WTC11 (cell line): ENCODE measurements at regions of chr2 and their contacts with region 1.

Region 1: GRCh38 chr2:71299507-71299906 is 32.1 kb upstream of the ZNF638 start:
- DNase-seq: no peak
- ATAC-seq: no peak; the same call in 1 of the 2 replicates
- H3K4me3 Mint-ChIP-seq: no peak overlapping the region
- H3K27ac Mint-ChIP-seq: no peak overlapping the region
- H3K4me1 Mint-ChIP-seq: no peaks in the 10 kb centered on the region
- H3K27me3 Mint-ChIP-seq: no peaks in the 10 kb centered on the region
- CTCF ChIP-seq: peak; percentile 60

Region 2: GRCh38 chr2:71226965-71227560 is 72.4 kb before region 1 on chr2 and contains the start of gene PAIP2B:
- CTCF ChIA-PET with region 1: interaction called, 14 read pairs
- POLR2A ChIA-PET with region 1: interaction called, 3 read pairs
- DNase-seq: peak; percentile 99
- ATAC-seq: peak; percentile 97
- H3K4me3 Mint-ChIP-seq: peak within 1 kb of the TSS; percentile 98
- H3K27ac Mint-ChIP-seq: peak within 1 kb of the TSS; percentile 96
- H3K4me1 Mint-ChIP-seq: peaks cover 12% of the 10 kb centered on the region
- H3K27me3 Mint-ChIP-seq: peaks cover 8% of the 10 kb centered on the region; the same call in 1 of the 2 replicates
- CTCF ChIP-seq: no peak
- total RNA-seq, gene PAIP2B: 19.3 to 22.4 TPM (median 22.2 TPM) in 3 replicates

Region 3: GRCh38 chr2:71250945-71251344 is 48.6 kb before region 1 on chr2:
- CTCF ChIA-PET with region 1: no interaction called
- POLR2A ChIA-PET with region 1: no interaction called
- DNase-seq: peak; percentile 18
- ATAC-seq: peak; percentile 47
- H3K4me3 Mint-ChIP-seq: no peak overlapping the region
- H3K27ac Mint-ChIP-seq: no peak overlapping the region
- H3K4me1 Mint-ChIP-seq: no peaks in the 10 kb centered on the region
- H3K27me3 Mint-ChIP-seq: peaks cover 34% of the 10 kb centered on the region
- CTCF ChIP-seq: no peak

Region 4: GRCh38 chr2:71276311-71277146 is 23.0 kb before region 1 on chr2:
- CTCF ChIA-PET with region 1: interaction called, 23 read pairs
- POLR2A ChIA-PET with region 1: no interaction called
- DNase-seq: peak; percentile 98
- ATAC-seq: peak; percentile 95
- H3K4me3 Mint-ChIP-seq: peak overlapping the region; percentile 80
- H3K27ac Mint-ChIP-seq: no peak overlapping the region
- H3K4me1 Mint-ChIP-seq: peaks cover 38% of the 10 kb centered on the region
- H3K27me3 Mint-ChIP-seq: peaks cover 55% of the 10 kb centered on the region
- CTCF ChIP-seq: no peak

Region 5: DNA sequence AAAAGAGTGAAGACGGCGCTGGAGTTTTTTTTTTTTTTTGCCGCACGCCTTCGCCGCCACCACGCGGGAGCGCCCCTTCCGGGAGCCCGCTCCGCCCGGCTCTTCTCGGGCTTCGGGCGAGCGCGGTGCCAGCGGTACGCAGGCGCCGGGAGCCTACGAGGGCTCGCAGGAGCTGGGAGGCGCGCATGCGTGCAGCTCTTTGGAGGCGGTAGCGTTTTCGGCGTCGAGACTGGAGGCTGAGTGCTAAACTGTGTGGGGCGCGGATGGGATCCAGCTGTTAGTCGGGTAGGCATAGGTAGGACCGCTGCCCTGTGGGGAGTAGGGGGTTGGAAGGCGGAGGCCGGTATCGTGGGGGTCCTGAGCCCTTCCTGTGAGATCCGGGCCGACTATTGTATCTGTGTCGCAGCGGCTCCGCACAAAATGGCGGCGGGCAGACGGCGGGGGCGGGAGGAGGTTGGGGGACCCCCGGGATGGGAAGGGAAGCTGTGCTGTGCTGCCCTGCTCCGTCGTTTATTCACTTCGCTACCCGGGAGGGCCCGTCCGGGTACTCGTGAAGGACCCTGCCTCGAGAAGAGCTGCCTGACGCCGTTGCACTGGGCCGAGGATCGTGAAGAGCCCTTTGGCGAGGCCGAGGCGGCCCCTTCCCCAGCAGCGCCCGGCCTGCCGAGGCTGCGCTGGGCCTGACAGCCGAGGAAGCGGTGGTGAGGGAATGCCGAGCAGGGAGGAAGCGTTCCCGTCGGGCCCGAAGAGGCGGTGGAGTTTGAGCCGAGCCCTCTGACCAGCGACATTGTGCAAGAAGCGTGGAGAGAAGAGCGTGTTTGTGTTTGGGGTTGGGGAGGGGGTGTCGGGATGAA is 32.3 kb after region 1 on chr2 and contains the start of gene ZNF638:
- CTCF ChIA-PET with region 1: interaction called, 77 read pairs
- POLR2A ChIA-PET with region 1: interaction called, 7 read pairs
- DNase-seq: peak; percentile 91
- ATAC-seq: peak; percentile 92
- H3K4me3 Mint-ChIP-seq: peak within 1 kb of the TSS; percentile 99
- H3K27ac Mint-ChIP-seq: peak within 1 kb of the TSS; percentile 100
- H3K4me1 Mint-ChIP-seq: peaks cover 37% of the 10 kb centered on the region
- H3K27me3 Mint-ChIP-seq: no peaks in the 10 kb centered on the region
- CTCF ChIP-seq: peak; percentile 62; the same call in 1 of the 2 replicates
- total RNA-seq, gene ZNF638: 109 to 131 TPM (median 128 TPM) in 3 replicates

Region 6: DNA sequence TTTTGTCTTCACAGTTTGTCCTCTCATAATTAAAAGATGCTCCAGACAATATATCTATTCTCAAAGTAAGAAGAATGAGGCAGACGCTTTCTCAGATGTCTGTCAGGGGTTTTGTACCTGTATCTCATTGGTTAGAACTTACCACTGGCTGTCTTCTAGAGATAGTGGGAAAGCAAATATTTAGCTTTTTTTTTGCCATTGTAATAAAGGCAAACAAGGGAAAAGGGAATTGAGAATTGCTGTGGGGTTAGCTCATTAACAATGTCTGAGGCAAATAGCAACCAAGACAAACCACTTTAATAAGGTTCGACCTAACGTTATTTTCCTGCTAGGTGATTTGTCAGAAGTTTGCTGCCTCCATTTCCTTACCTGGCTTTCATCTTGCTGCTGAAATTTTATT is 62.1 kb after region 1 on chr2:
- CTCF ChIA-PET with region 1: interaction called, 11 read pairs
- POLR2A ChIA-PET with region 1: no interaction called
- DNase-seq: no peak
- ATAC-seq: no peak
- H3K4me3 Mint-ChIP-seq: no peak overlapping the region
- H3K27ac Mint-ChIP-seq: no peak overlapping the region; the same call in 1 of the 2 replicates
- H3K4me1 Mint-ChIP-seq: no peaks in the 10 kb centered on the region
- H3K27me3 Mint-ChIP-seq: no peaks in the 10 kb centered on the region
- CTCF ChIP-seq: no peak

Region 7: DNA sequence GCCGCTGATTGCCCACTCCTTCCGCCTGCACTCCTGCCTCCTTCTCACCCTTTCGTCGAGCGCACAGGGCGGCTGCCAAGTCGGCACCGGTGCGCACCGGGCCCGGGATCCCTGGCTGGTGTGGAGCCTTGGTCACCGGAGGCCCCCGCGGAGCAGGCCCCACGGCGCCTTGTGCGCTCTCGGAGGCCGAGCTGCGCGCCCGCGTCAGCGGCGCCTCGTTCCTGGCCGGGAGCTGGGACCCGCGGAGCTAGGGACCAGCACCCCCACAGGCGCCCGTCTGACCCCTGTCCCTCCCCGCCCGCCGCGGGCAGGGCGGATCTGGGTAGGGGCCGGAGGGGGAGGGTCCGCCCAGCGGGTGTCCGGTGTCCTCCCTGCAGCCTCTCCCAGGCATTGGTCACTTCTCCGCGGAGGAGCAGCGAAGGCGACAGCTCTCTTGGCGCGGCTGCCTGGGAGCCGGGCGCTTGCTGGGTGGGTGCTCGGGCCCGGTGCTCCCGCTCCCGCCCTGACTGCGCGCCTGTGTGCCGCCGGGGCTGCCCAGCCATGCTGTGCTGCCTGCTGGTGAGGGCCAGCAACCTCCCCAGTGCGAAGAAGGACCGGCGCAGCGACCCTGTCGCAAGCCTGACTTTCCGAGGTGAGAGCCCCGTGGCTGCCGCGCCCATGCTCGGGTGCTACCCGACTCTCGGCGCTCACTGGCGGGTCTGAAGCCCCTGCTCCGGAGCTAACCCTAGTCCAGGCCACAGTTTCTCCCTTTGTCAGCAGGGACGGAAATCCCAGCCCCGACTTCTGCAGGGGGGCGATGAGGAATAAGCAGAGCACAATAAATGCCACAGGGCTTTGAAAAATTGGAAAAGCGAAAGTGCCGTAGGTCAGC is 167.0 kb after region 1 on chr2:
- CTCF ChIA-PET with region 1: interaction called, 10 read pairs
- POLR2A ChIA-PET with region 1: no interaction called
- DNase-seq: peak; percentile 66
- ATAC-seq: peak; percentile 59
- H3K4me3 Mint-ChIP-seq: peak overlapping the region; percentile 72
- H3K27ac Mint-ChIP-seq: no peak overlapping the region
- H3K4me1 Mint-ChIP-seq: peaks cover 15% of the 10 kb centered on the region
- H3K27me3 Mint-ChIP-seq: peaks cover 29% of the 10 kb centered on the region
- CTCF ChIP-seq: no peak